ENCODE measurements at regions of chr4 and their contacts with region 1.

Region 1: DNA sequence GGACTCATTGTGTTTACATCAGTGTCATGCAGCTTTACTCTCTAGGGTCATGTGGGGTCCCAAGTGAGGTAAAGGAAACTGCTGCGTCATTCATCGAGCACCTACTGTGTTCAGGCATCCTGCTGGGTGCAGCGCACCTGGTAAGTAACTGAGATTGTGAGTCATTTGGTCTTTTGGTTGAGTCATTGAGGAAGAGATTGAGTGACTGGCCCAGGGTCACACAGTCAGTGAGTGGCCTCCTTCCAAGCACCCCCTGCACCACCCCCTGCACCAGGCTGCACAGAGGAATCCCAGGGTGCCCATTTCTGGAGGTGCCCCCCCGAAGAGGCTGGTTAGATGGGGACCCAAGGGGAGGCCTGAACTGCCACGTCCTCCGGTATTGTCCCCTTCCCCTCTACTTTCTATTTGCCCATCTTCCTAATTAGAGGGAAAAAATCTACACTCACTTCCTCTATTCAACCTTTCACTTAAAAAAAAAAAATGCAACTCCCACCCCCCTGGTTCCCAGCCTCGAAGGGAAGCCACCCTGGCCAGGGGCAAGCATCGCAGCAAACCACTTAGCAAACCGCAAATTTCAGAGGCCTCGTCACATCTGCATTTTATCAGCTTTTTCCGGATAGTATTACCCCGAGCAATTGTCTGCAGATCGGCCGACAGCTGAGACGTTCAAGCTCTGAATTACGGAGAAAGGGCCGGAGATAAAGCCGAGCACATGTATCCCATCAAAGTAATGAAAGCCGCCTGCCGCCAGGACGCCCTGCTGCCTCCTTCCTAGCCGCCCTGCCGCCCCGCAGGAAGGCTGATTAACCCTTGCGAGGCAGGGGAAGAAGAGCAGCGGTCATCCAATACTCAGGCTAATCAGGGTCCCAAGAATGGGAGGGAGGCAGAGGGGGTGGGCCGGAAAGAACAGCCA is 96.3 kb upstream of the MSX1 start:
- DNase-seq: peak; percentile 98
- ATAC-seq: peak; percentile 80
- H3K4me3 ChIP-seq: peak overlapping the region; percentile 21 to 45
- H3K27ac ChIP-seq: peak overlapping the region; percentile 89
- H3K4me1 ChIP-seq: peaks cover 62 to 82% of the 10 kb centered on the region in 2 experiments
- H3K27me3 ChIP-seq: no peaks in the 10 kb centered on the region
- CTCF ChIP-seq: no peak
- POLR2A ChIP-seq: no peak
- RAD21 ChIP-seq: no peak

Region 2: DNA sequence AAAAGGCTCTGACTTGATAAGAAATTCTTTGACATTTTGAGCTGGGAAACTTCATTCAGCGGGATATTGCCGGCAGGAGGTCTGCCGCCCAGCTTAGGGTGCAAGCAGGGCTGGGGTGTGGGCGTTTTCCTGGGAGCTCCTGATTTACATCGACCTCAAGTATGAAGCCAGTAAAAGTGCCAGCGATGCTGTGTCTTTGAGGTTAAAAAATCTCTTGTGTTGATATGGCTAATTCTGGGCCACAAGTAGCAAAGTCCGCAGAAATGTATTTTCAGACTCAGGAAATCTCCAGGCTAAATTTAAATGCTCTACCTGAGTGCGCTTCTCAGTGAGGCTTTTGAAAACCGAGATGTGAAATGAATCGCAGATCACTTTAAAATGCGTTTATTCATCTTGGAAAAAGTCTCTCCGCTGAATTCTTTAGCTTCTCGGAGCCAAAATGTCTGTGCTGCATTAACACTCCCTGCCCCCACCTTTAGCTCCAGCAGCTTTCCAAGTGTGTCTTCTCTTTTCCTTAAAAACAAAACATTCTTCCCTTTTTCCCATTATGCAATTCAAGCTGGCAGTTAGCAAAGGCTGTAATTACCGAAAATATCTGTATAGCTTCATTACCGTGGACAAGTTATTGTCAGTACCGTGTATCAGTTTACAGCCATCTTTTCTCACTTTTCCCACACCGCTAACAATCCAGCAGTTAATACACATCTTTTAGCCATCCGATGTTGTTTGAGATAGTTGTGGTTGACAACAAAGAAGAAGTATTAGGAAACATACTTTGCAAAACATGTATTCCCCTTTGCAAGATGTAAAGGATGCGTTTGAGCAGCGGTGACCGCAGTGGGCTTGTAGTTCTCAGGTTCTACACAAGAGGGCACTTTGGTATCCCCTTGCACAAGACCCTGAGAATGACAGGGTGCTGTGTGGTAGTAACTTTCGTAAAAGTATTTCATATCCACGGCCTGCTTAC is 85.3 kb before region 1 on chr4:
- CTCF ChIA-PET with region 1: interaction called, 3 read pairs
- POLR2A ChIA-PET with region 1: no interaction called
- RAD21 ChIA-PET with region 1: interaction called in 1 of 2 experiments, 4 read pairs
- intact Hi-C with region 1: loop called (anchors 5 kb)
- DNase-seq: peak; percentile 36
- ATAC-seq: peak; percentile 83
- H3K4me3 ChIP-seq: no peak overlapping the region
- H3K27ac ChIP-seq: no peak overlapping the region
- H3K4me1 ChIP-seq: peaks cover 5 to 11% of the 10 kb centered on the region in 2 experiments
- H3K27me3 ChIP-seq: no peaks in the 10 kb centered on the region
- CTCF ChIP-seq: peak; percentile 56 to 84 (median 80); a peak in 5 of 6 replicates
- POLR2A ChIP-seq: no peak
- RAD21 ChIP-seq: peak; percentile 78

Region 3: DNA sequence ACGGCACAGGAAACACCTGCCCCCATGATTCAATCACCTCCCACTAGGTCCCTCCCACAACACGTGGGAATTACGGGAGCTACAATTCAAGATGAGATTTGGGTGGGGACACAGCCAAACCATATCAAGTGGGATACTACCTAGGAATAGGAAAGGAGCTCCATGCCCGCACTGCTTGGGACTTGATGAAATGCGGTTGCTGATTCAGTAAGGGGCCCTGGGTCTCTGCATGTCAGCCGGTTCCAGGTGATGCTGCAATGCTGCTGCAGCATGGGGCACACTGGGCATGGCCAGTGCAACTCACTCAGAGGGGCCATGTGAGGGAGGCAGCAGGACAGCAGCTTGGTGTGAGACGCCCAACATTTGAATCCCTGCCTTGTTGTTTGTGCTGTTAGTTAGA is 62.3 kb after region 1 on chr4:
- CTCF ChIA-PET with region 1: no interaction called
- POLR2A ChIA-PET with region 1: no interaction called
- RAD21 ChIA-PET with region 1: no interaction called
- intact Hi-C with region 1: no loop called
- DNase-seq: no peak
- ATAC-seq: no peak
- H3K4me3 ChIP-seq: no peak overlapping the region
- H3K27ac ChIP-seq: no peak overlapping the region
- H3K4me1 ChIP-seq: no peaks in the 10 kb centered on the region; a peak in 1 of 4 replicates
- H3K27me3 ChIP-seq: no peaks in the 10 kb centered on the region
- CTCF ChIP-seq: no peak
- POLR2A ChIP-seq: no peak
- RAD21 ChIP-seq: no peak

Measured in HCT116 (cell line).